ENCODE measurements at regions of chr4 and their contacts with region 1.

Region 1: DNA sequence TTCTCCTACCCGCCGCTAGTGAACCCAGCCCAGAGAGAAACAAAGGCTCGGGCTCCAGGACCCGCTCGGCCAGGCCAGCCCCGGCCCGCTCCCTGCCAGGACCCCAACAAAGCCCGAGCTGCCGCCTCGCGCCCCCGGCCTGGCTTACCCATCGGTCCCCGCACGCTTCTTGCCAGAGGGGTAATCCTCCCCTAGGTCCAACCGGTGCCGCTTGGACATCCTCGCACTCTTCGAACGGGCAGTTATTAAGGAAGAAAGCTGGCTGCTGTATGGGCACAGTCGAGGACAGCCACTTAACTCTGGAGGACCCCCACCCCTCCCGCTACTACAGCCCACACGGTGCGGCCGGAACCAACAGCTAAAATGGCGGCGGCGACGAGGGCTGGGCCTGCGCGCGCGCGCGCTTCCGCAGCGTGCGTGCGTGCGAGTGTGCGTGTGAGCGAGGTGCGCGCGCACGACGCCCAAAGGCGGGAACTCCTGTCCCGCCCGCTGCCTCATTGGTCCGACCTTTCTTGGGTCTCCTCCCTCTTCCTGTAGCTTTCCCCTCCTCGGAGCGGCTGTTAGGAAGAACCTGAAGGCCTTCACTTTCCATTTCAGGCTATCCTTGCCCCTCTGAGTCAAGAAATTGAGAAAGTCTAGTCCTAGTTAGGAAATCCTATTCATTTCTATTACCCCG is at the start of gene DHX15:
- DNase-seq: peak; percentile 95 to 97
- ATAC-seq: peak; percentile 95 to 98 (median 98)
- H3K4me3 ChIP-seq: peak within 1 kb of the TSS; percentile 82
- H3K27ac ChIP-seq: peak within 1 kb of the TSS; percentile 97
- H3K4me1 ChIP-seq: peaks cover 37% of the 10 kb centered on the region
- H3K27me3 ChIP-seq: no peaks in the 10 kb centered on the region
- CTCF ChIP-seq: no peak
- total RNA-seq, gene DHX15: 35.2 to 69.7 (median 51.8) TPM

Region 2: GRCh38 chr4:24472514-24473308 is 111.6 kb before region 1 on chr4:
- intact Hi-C with region 1: loop called (anchors 5 to 10 kb)
- DNase-seq: peak; percentile 86 to 94
- ATAC-seq: peak; percentile 88 to 93 (median 91)
- H3K4me3 ChIP-seq: peak overlapping the region; percentile 79
- H3K27ac ChIP-seq: peak overlapping the region; percentile 55
- H3K4me1 ChIP-seq: peaks cover 15% of the 10 kb centered on the region
- H3K27me3 ChIP-seq: peaks cover 0 to 10% (median 0%) of the 10 kb centered on the region in 3 donors
- CTCF ChIP-seq: peak; percentile 78

Region 3: GRCh38 chr4:24497221-24497620 is 87.1 kb before region 1 on chr4:
- intact Hi-C with region 1: no loop called
- DNase-seq: no peak
- ATAC-seq: no peak
- H3K4me3 ChIP-seq: no peak overlapping the region
- H3K27ac ChIP-seq: no peak overlapping the region
- H3K4me1 ChIP-seq: no peaks in the 10 kb centered on the region
- H3K27me3 ChIP-seq: no peaks in the 10 kb centered on the region
- CTCF ChIP-seq: no peak

Region 4: GRCh38 chr4:24519649-24520048 is 64.7 kb before region 1 on chr4:
- intact Hi-C with region 1: loop called in 1 of 2 experiments (anchors 1 kb)
- DNase-seq: no peak
- ATAC-seq: peak in 1 of 4 donors; percentile 27
- H3K4me3 ChIP-seq: no peak overlapping the region
- H3K27ac ChIP-seq: no peak overlapping the region
- H3K4me1 ChIP-seq: peaks cover 24% of the 10 kb centered on the region
- H3K27me3 ChIP-seq: no peaks in the 10 kb centered on the region
- CTCF ChIP-seq: no peak

Region 5: GRCh38 chr4:24794916-24795665 is 210.8 kb after region 1 on chr4 and contains the start of gene SOD3:
- intact Hi-C with region 1: loop called in 1 of 2 experiments (anchors 10 kb)
- DNase-seq: peak; percentile 80 to 81
- ATAC-seq: peak; percentile 82 to 89 (median 86)
- H3K4me3 ChIP-seq: peak within 1 kb of the TSS; percentile 55
- H3K27ac ChIP-seq: peak within 1 kb of the TSS; percentile 74
- H3K4me1 ChIP-seq: peaks cover 18% of the 10 kb centered on the region
- H3K27me3 ChIP-seq: peaks cover 0 to 2% (median 0%) of the 10 kb centered on the region in 3 donors
- CTCF ChIP-seq: no peak
- total RNA-seq, gene SOD3: 3.8 to 15.6 (median 9.2) TPM

Region 6: DNA sequence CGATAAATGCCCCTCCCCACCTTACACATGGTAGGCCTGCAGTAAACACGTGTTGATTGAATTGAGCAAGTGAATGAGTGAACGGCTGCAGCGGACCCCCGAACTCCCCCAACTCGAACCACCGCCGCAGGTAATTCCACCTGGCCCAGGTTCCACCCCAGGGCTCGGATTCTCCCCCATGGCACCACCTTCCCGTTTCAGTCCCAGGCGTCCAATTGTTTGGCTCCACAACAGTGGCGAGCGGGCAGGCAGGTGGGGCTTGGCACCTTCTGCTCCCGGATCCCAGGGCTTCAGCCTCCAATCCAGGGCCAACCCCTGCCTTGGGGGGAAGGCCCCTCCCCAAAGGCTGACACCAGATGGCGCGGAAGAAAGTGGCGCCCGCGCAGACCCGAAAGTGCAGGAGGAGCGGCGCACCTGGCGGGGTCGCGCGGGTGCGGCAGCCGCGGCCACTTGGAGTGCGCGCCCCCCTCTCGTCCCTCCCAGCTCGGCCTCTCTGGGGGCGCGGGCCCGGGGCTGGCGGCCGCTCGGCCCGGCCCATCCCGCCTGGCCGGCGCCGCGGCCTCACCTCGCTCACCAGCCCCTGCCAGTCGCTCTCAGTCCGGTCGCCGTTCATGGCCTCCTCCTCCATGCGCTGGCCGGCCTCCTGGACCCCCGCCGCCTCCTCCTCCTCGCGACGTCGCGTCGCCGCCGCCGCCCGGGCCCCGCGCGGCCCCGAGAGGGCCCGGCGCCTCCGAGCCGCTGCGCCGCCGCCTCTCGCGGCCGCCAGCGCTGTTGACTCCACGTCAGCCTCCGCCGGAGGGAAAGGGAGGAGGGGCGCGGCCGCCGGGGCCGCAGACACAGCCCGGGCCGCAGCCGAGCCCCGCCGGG is 328.2 kb after region 1 on chr4 and contains the start of gene CCDC149:
- intact Hi-C with region 1: loop called in 1 of 2 experiments (anchors 10 kb)
- DNase-seq: peak; percentile 68 to 79
- ATAC-seq: peak; percentile 82 to 88 (median 86)
- H3K4me3 ChIP-seq: peak within 1 kb of the TSS; percentile 83
- H3K27ac ChIP-seq: peak within 1 kb of the TSS; percentile 88
- H3K4me1 ChIP-seq: no peaks in the 10 kb centered on the region
- H3K27me3 ChIP-seq: no peaks in the 10 kb centered on the region
- CTCF ChIP-seq: peak; percentile 13
- total RNA-seq, gene CCDC149: 7.8 to 10.8 (median 9.3) TPM

Measured in psoas muscle (tissue), 8 donors.